B cell (primary cell): ENCODE measurements at regions of chr20 and their contacts with region 1.

Region 1: GRCh38 chr20:22333885-22334545 is 250.4 kb downstream of the FOXA2 start:
- DNase-seq: peak; percentile 55
- ATAC-seq: peak; percentile 51
- H3K4me3 ChIP-seq: no peak overlapping the region
- H3K4me3 Mint-ChIP-seq: no peak overlapping the region
- H3K27ac ChIP-seq: no peak overlapping the region
- H3K27ac Mint-ChIP-seq: no peak overlapping the region
- H3K4me1 ChIP-seq: no peaks in the 10 kb centered on the region
- H3K4me1 Mint-ChIP-seq: no peaks in the 10 kb centered on the region
- H3K27me3 ChIP-seq: peaks cover 0 to 5% (median 1%) of the 10 kb centered on the region in 4 experiments
- H3K27me3 Mint-ChIP-seq: peaks cover 21% of the 10 kb centered on the region
- CTCF ChIP-seq: peak; percentile 77

Region 2: DNA sequence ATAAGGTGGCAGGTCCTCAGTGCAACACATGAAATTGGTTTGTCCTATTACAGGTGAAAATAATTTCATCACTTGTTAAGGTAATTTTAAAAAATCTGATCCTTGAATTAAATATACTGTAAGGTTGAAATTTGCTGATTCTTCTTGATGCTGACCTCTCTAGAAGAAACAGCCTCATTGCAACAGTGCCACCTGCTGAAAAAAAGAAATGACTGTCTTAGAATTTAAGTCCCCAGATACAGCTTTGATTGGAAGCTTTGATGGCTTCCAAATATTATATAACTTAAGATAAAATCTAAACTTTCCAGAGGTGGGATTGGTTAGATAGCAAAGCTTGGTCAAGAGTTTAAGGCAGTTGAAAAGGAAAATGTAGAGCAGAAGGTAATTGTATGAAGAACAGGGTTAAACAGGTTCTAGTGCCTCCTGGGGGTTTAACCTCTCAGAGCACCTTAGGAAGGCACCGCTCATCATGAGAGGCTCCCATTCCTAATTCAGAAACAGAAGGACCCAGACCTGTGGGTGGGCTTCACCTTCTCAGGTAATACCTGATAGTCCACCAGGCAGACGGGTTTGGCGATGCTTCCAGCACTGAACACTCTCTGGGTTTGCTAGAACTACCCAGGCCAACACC is 227.6 kb before region 1 on chr20:
- CTCF ChIA-PET with region 1: no interaction called
- POLR2A ChIA-PET with region 1: no interaction called
- intact Hi-C with region 1: no loop called
- DNase-seq: no peak
- ATAC-seq: no peak
- H3K4me3 ChIP-seq: no peak overlapping the region
- H3K4me3 Mint-ChIP-seq: no peak overlapping the region
- H3K27ac ChIP-seq: no peak overlapping the region
- H3K27ac Mint-ChIP-seq: no peak overlapping the region
- H3K4me1 ChIP-seq: no peaks in the 10 kb centered on the region
- H3K4me1 Mint-ChIP-seq: no peaks in the 10 kb centered on the region
- H3K27me3 ChIP-seq: no peaks in the 10 kb centered on the region
- H3K27me3 Mint-ChIP-seq: no peaks in the 10 kb centered on the region
- CTCF ChIP-seq: no peak

Region 3: DNA sequence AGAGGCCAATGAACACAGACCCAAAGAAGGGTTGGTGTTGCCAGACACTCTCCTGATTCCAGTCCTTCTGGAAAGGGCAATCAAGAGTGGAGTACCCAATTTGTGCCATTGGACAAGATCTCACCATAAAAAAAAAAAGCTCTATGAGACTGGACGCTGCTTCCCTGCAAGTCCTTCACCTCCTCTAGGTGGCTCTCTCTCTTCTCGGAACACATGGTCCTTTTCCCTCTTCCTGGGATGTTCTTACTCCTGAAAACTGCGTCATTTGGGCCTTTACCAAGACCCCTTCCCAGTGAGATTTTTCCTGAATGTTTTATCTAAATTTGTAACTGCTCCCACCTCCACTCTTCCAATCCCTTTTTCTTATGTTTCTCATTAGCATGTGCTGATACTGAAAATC is 30.5 kb before region 1 on chr20:
- CTCF ChIA-PET with region 1: no interaction called
- POLR2A ChIA-PET with region 1: no interaction called
- intact Hi-C with region 1: no loop called
- DNase-seq: no peak
- ATAC-seq: no peak
- H3K4me3 ChIP-seq: no peak overlapping the region
- H3K4me3 Mint-ChIP-seq: no peak overlapping the region
- H3K27ac ChIP-seq: no peak overlapping the region
- H3K27ac Mint-ChIP-seq: no peak overlapping the region
- H3K4me1 ChIP-seq: no peaks in the 10 kb centered on the region
- H3K4me1 Mint-ChIP-seq: no peaks in the 10 kb centered on the region
- H3K27me3 ChIP-seq: peaks cover 0 to 2% (median 0%) of the 10 kb centered on the region in 4 experiments
- H3K27me3 Mint-ChIP-seq: peaks cover 8% of the 10 kb centered on the region
- CTCF ChIP-seq: no peak

Region 4: GRCh38 chr20:22346716-22347115 is 12.7 kb after region 1 on chr20:
- CTCF ChIA-PET with region 1: interaction called, 23 read pairs
- POLR2A ChIA-PET with region 1: interaction called, 10 read pairs
- intact Hi-C with region 1: no loop called
- DNase-seq: no peak
- ATAC-seq: no peak
- H3K4me3 ChIP-seq: no peak overlapping the region
- H3K4me3 Mint-ChIP-seq: no peak overlapping the region
- H3K27ac ChIP-seq: no peak overlapping the region
- H3K27ac Mint-ChIP-seq: no peak overlapping the region
- H3K4me1 ChIP-seq: peaks cover 7 to 10% of the 10 kb centered on the region in 2 donors
- H3K4me1 Mint-ChIP-seq: peaks cover 9% of the 10 kb centered on the region
- H3K27me3 ChIP-seq: no peaks in the 10 kb centered on the region
- H3K27me3 Mint-ChIP-seq: peaks cover under 1% of the 10 kb centered on the region
- CTCF ChIP-seq: no peak

Region 5: GRCh38 chr20:22453239-22454080 is 119.4 kb after region 1 on chr20:
- CTCF ChIA-PET with region 1: no interaction called
- POLR2A ChIA-PET with region 1: no interaction called
- intact Hi-C with region 1: no loop called
- DNase-seq: no peak
- ATAC-seq: no peak
- H3K4me3 ChIP-seq: no peak overlapping the region
- H3K4me3 Mint-ChIP-seq: no peak overlapping the region
- H3K27ac ChIP-seq: no peak overlapping the region
- H3K27ac Mint-ChIP-seq: no peak overlapping the region
- H3K4me1 ChIP-seq: no peaks in the 10 kb centered on the region
- H3K4me1 Mint-ChIP-seq: no peaks in the 10 kb centered on the region
- H3K27me3 ChIP-seq: peaks cover 0 to 3% (median 0%) of the 10 kb centered on the region in 4 experiments
- H3K27me3 Mint-ChIP-seq: peaks cover 13% of the 10 kb centered on the region
- CTCF ChIP-seq: no peak

Region 6: GRCh38 chr20:22684072-22684762 is 350.2 kb after region 1 on chr20:
- CTCF ChIA-PET with region 1: interaction called, 75 read pairs
- POLR2A ChIA-PET with region 1: no interaction called
- intact Hi-C with region 1: loop called (anchors 1 kb)
- DNase-seq: peak; percentile 63
- ATAC-seq: peak; percentile 47
- H3K4me3 ChIP-seq: no peak overlapping the region
- H3K4me3 Mint-ChIP-seq: no peak overlapping the region
- H3K27ac ChIP-seq: no peak overlapping the region
- H3K27ac Mint-ChIP-seq: no peak overlapping the region
- H3K4me1 ChIP-seq: peaks cover 8% of the 10 kb centered on the region in 2 donors
- H3K4me1 Mint-ChIP-seq: peaks cover 4% of the 10 kb centered on the region
- H3K27me3 ChIP-seq: peaks cover 0 to 2% (median 0%) of the 10 kb centered on the region in 4 experiments
- H3K27me3 Mint-ChIP-seq: no peaks in the 10 kb centered on the region
- CTCF ChIP-seq: peak; percentile 66